Gastrocnemius medialis (tissue), 4 donors: ENCODE measurements at regions of chr12 and their contacts with region 1.

Region 1: DNA sequence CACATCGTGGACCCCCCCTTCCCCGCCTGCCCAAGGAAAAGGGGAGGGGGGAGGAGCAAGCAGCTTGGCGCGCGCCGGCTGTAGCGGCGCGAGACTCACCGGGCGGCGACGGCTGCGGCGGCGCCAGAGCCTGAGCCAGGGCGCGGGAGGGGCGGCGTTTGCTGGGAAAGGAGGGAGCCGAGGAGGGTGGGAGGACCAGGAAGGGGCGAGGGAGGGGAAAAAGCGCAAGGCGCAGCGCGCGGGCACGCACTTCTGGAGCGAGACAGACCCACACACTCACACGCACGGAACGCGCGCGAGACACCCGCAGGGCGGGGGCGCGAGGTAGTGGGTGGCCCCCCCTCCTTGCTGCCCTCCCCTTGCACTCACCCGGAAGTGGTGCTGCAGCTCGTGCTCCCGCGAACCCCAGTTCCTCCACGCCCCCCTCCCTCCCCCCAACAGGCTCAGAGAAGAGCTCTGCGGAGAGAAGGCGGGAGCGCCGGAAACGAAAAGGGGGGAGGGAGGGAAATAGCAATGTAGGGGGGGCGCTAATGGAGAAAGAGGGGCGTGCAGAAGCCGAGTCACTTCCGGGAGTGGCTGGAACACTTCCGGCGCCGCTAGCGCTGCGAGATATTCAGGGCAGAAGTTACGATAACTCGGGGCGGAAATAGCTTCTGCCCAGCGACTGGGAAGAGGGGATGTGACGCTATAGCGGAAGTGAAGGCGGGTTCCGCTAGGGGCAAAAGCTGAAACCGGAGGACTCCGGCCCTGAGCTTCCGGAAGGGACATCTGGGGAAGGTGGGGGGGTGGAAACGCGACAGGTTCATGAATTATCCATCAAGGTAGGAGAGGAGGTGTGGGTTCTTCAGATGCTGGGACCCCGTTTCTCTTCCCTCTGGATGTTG is at the start of gene ZNF384:
- DNase-seq: peak; percentile 98
- ATAC-seq: peak; percentile 94 to 98
- H3K4me3 ChIP-seq: peak within 1 kb of the TSS; percentile 79 to 92 (median 88)
- H3K27ac ChIP-seq: peak within 1 kb of the TSS; percentile 94 to 98 (median 96)
- H3K4me1 ChIP-seq: peaks cover 27 to 30% of the 10 kb centered on the region in 2 donors
- H3K27me3 ChIP-seq: no peaks in the 10 kb centered on the region
- CTCF ChIP-seq: peak in 4 of 5 experiments; percentile 27 to 54 (median 38)
- POLR2A ChIP-seq: peak; percentile 44 to 68
- total RNA-seq, gene ZNF384: 22.4 to 35.3 (median 27.9) TPM

Region 2: GRCh38 chr12:6493497-6494257 is 195.6 kb before region 1 on chr12 and contains the start of gene NCAPD2:
- in situ Hi-C with region 1: no loop called
- intact Hi-C with region 1: loop called (anchors 10 kb)
- DNase-seq: peak; percentile 94 to 95
- ATAC-seq: peak; percentile 90 to 92
- H3K4me3 ChIP-seq: peak within 1 kb of the TSS; percentile 81 to 99 (median 88)
- H3K27ac ChIP-seq: peak within 1 kb of the TSS; percentile 93 to 100 (median 98)
- H3K4me1 ChIP-seq: peaks cover 21 to 27% of the 10 kb centered on the region in 2 donors
- H3K27me3 ChIP-seq: no peaks in the 10 kb centered on the region
- CTCF ChIP-seq: peak; percentile 54 to 79 (median 60)
- POLR2A ChIP-seq: peak; percentile 65 to 89
- total RNA-seq, gene NCAPD2: 12.3 to 250 (median 13.3) TPM

Region 3: DNA sequence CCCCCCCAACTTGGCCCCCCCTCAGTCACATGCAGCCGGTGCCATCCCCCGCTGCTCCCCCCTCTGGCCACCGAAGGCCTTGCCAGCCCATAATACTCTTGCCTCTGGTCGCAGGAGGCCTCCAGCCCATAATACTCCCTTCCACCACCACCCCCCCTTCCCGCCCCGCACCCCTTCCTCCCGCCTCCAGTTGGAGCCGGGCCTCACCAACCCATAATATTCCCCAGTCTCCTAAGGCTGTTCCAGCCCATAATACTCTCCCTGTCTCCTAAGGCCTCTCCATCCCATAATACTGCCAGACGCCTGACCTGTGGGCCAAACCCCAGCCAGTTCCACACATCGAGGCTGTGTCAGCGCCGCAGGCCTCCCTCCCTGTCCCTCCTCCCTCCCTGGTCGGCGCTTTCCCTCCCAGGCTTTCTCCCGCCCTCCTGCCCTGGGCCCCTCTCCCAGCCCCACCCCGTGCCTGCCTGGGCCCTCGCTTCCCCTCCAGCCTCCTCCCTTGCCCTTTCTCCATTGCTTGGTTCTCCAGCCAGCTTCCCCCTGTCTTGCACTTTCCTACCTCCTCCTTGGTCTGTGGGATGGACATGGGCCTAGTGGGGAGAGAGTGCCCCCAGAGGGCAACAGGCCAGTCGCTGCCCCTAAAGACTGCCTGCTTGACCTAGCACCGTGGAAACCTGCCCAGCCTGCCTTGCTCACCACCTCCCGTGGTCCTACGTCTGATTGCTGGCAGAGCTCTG is 75.3 kb before region 1 on chr12:
- in situ Hi-C with region 1: no loop called
- intact Hi-C with region 1: loop called (anchors 1 kb)
- DNase-seq: peak; percentile 70 to 83
- ATAC-seq: peak; percentile 75 to 81
- H3K4me3 ChIP-seq: no peak overlapping the region
- H3K27ac ChIP-seq: peak overlapping the region; percentile 74 to 93 (median 84)
- H3K4me1 ChIP-seq: peaks cover 16 to 25% of the 10 kb centered on the region in 2 donors
- H3K27me3 ChIP-seq: no peaks in the 10 kb centered on the region
- CTCF ChIP-seq: no peak
- POLR2A ChIP-seq: no peak

Region 4: DNA sequence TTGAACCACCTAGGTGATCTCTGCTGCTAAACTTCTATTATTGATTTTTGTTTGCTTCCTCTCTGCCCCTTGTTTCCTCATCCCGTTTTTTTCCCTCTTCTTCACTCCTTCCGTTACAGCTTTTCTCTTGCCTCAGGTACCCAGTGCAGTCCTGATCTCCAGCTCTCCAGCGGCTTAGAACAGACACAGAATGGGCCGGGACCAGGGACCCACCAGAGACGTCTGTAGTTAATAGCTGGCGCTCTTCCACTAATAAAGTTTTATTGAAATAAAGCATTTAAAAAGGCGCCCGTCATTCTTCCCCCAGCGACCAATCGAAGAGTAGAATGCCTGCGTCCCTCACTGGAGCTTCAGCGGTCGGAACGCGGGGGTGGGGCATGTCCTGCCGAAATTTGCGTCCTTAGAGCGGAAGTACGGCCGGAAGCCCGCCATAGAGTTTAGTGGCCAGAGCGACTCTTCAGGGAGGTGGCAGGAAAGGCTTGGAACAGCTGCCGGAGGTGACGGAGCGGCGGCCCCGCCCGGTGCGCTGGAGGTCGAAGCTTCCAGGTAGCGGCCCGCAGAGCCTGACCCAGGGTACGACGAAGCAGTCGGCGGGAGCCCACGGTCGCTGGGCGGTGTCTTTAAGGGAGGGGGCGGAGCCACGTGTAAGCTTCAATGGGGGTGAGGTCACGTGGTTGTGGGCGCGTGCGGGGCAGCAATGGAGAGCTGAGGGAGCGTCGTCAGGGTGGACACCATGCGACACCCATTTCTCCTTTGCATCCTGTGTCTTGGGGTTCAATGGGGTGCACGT is 34.6 kb after region 1 on chr12 and contains the start of gene COPS7A:
- in situ Hi-C with region 1: no loop called
- intact Hi-C with region 1: loop called (anchors 1 kb)
- DNase-seq: peak; percentile 96 to 98
- ATAC-seq: peak; percentile 99
- H3K4me3 ChIP-seq: peak within 1 kb of the TSS; percentile 55 to 80 (median 74)
- H3K27ac ChIP-seq: peak within 1 kb of the TSS; percentile 81 to 90 (median 86)
- H3K4me1 ChIP-seq: peaks cover 6 to 10% of the 10 kb centered on the region in 2 donors
- H3K27me3 ChIP-seq: no peaks in the 10 kb centered on the region
- CTCF ChIP-seq: no peak
- POLR2A ChIP-seq: peak; percentile 39 to 58
- total RNA-seq, gene COPS7A: 82.0 to 132 (median 99.0) TPM

Region 5: GRCh38 chr12:6851921-6852650 is 162.8 kb after region 1 on chr12 and contains the start of gene USP5:
- in situ Hi-C with region 1: no loop called
- intact Hi-C with region 1: loop called (anchors 1 kb)
- DNase-seq: peak; percentile 99
- ATAC-seq: peak; percentile 85 to 88
- H3K4me3 ChIP-seq: peak within 1 kb of the TSS; percentile 68 to 83 (median 74)
- H3K27ac ChIP-seq: peak within 1 kb of the TSS; percentile 86 to 97 (median 92)
- H3K4me1 ChIP-seq: peaks cover 13 to 17% of the 10 kb centered on the region in 2 donors
- H3K27me3 ChIP-seq: no peaks in the 10 kb centered on the region
- CTCF ChIP-seq: peak in 2 of 5 experiments; percentile 13 to 23
- POLR2A ChIP-seq: peak in 1 of 2 donors; percentile 64
- total RNA-seq, gene USP5: 66.4 to 120 (median 74.1) TPM